T-cell (primary cell): ENCODE measurements at regions of chr10 and their contacts with region 1.

Region 1: GRCh38 chr10:68988530-68989316 is at the start of gene KIFBP:
- DNase-seq: peak; percentile 52 to 92 (median 73)
- ATAC-seq: peak; percentile 83 to 90 (median 86)
- H3K4me3 ChIP-seq: peak within 1 kb of the TSS; percentile 88 to 93
- H3K4me3 Mint-ChIP-seq: peak within 1 kb of the TSS; percentile 97 to 99 (median 99)
- H3K27ac ChIP-seq: peak within 1 kb of the TSS; percentile 62
- H3K27ac Mint-ChIP-seq: peak within 1 kb of the TSS; percentile 94 to 97
- H3K4me1 ChIP-seq: peaks cover 9 to 35% of the 10 kb centered on the region in 2 experiments
- H3K4me1 Mint-ChIP-seq: peaks cover 57 to 59% (median 58%) of the 10 kb centered on the region in 3 donors
- H3K27me3 ChIP-seq: no peaks in the 10 kb centered on the region
- H3K27me3 Mint-ChIP-seq: no peaks in the 10 kb centered on the region
- total RNA-seq, gene KIFBP: 5.9 to 15.2 (median 13.2) TPM

Region 2: GRCh38 chr10:68924593-68924992 is 64.1 kb before region 1 on chr10:
- CTCF ChIA-PET with region 1: no interaction called
- POLR2A ChIA-PET with region 1: no interaction called
- DNase-seq: no peak
- ATAC-seq: no peak
- H3K4me3 ChIP-seq: no peak overlapping the region
- H3K4me3 Mint-ChIP-seq: no peak overlapping the region
- H3K27ac ChIP-seq: no peak overlapping the region
- H3K27ac Mint-ChIP-seq: peak overlapping the region in 1 of 2 donors; percentile 61
- H3K4me1 ChIP-seq: no peaks in the 10 kb centered on the region
- H3K4me1 Mint-ChIP-seq: peaks cover 5 to 15% (median 11%) of the 10 kb centered on the region in 3 donors
- H3K27me3 ChIP-seq: no peaks in the 10 kb centered on the region
- H3K27me3 Mint-ChIP-seq: no peaks in the 10 kb centered on the region

Region 3: DNA sequence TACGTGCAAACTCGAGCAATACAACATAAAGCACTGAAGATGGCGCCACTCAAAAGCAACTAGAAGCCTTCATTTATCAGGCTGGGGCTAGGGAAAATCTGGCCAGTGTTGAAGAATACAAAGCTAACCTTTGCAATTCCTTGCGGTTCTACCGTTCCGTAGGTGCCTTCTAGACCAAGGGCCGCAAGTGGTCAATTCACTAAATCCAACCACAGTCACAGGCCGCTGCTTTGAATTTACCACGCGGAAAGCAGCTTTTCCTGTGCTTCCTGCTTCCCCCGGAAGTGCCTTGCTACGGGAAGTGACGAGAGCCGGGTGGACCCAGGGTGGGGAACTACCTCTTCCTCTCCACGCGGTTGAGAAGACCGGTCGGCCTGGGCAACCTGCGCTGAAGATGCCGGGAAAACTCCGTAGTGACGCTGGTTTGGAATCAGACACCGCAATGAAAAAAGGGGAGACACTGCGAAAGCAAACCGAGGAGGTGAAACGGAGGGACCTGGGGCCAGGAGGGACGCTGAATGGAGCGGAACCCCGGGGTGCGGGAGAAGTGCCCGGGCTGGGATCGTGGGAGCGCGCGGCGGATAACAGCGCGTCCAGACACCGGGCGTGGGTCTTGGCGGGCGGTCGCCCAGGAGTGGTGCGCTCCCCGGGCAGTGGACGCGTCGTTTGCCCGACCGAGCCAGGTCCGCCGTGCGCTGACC is 32.7 kb before region 1 on chr10 and contains the start of gene DDX21:
- CTCF ChIA-PET with region 1: interaction called, 3 to 10 read pairs
- POLR2A ChIA-PET with region 1: interaction called, 3 to 9 read pairs
- DNase-seq: peak; percentile 69 to 94 (median 88)
- ATAC-seq: peak; percentile 89 to 92 (median 91)
- H3K4me3 ChIP-seq: peak within 1 kb of the TSS; percentile 83 to 93
- H3K4me3 Mint-ChIP-seq: peak within 1 kb of the TSS; percentile 95 to 99 (median 97)
- H3K27ac ChIP-seq: peak within 1 kb of the TSS; percentile 97
- H3K27ac Mint-ChIP-seq: peak within 1 kb of the TSS; percentile 95 to 99
- H3K4me1 ChIP-seq: peaks cover 21 to 35% of the 10 kb centered on the region in 2 experiments
- H3K4me1 Mint-ChIP-seq: peaks cover 28 to 40% (median 37%) of the 10 kb centered on the region in 3 donors
- H3K27me3 ChIP-seq: no peaks in the 10 kb centered on the region
- H3K27me3 Mint-ChIP-seq: no peaks in the 10 kb centered on the region
- total RNA-seq, gene DDX21: 53.7 to 86.0 (median 60.7) TPM

Region 4: DNA sequence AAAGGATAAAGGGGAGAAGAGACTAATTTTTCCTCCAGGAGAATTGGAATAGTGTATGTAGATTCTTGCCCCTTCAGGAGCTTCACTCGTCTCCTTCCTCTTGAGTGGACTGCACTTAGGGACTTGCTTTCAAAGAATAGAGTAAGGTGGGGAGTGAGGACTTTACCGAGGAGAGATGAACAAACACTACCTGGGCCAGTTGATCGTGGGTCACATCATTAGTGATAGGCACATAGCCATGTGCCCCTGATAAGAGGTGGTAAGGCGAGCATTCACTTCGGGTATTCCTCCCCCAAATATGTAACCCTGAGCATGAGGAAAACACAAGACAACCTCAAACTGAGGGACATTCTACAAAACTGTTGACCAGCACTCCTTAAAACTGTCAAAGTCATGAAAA is 14.7 kb before region 1 on chr10:
- CTCF ChIA-PET with region 1: interaction called in 1 of 2 experiments, 3 read pairs
- POLR2A ChIA-PET with region 1: interaction called, 6 to 13 read pairs
- DNase-seq: no peak
- ATAC-seq: no peak
- H3K4me3 ChIP-seq: no peak overlapping the region
- H3K4me3 Mint-ChIP-seq: no peak overlapping the region
- H3K27ac ChIP-seq: no peak overlapping the region
- H3K27ac Mint-ChIP-seq: peak overlapping the region in 1 of 2 donors; percentile 11
- H3K4me1 ChIP-seq: peaks cover 0 to 6% of the 10 kb centered on the region in 2 experiments
- H3K4me1 Mint-ChIP-seq: peaks cover 9 to 10% (median 9%) of the 10 kb centered on the region in 3 donors
- H3K27me3 ChIP-seq: no peaks in the 10 kb centered on the region
- H3K27me3 Mint-ChIP-seq: no peaks in the 10 kb centered on the region

Region 5: DNA sequence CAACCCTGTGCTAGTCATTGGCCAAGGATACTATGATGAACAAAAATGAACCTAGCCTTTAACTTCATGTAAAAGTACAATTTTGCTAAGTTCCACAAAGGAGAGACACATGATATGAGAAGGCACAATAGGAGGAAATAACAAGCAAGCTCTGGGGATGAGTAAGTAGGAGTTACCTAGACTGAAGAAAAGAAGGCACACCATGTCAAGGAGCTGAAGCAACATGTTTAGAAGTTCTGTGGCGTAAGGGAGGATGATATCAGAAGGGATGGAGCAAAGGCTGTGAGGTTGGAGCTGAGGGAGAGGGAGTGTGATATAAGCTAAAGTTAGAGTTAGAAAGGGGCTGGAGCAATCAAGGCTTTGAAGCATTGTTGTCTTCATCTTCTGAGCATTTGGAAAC is 25.4 kb after region 1 on chr10:
- CTCF ChIA-PET with region 1: no interaction called
- POLR2A ChIA-PET with region 1: no interaction called
- DNase-seq: no peak
- ATAC-seq: no peak
- H3K4me3 ChIP-seq: no peak overlapping the region
- H3K4me3 Mint-ChIP-seq: no peak overlapping the region
- H3K27ac ChIP-seq: no peak overlapping the region
- H3K27ac Mint-ChIP-seq: no peak overlapping the region
- H3K4me1 ChIP-seq: no peaks in the 10 kb centered on the region
- H3K4me1 Mint-ChIP-seq: peaks cover 0 to 5% (median 0%) of the 10 kb centered on the region in 3 donors
- H3K27me3 ChIP-seq: no peaks in the 10 kb centered on the region
- H3K27me3 Mint-ChIP-seq: no peaks in the 10 kb centered on the region

Region 6: GRCh38 chr10:69045441-69046300 is 56.9 kb after region 1 on chr10:
- CTCF ChIA-PET with region 1: no interaction called
- POLR2A ChIA-PET with region 1: no interaction called
- DNase-seq: peak in 21 of 35 experiments; percentile 7 to 66 (median 30)
- ATAC-seq: peak; percentile 71 to 87 (median 78)
- H3K4me3 ChIP-seq: no peak overlapping the region
- H3K4me3 Mint-ChIP-seq: peak overlapping the region; percentile 42 to 63 (median 46)
- H3K27ac ChIP-seq: peak overlapping the region; percentile 93
- H3K27ac Mint-ChIP-seq: peak overlapping the region; percentile 96 to 98
- H3K4me1 ChIP-seq: peaks cover 8 to 46% of the 10 kb centered on the region in 2 experiments
- H3K4me1 Mint-ChIP-seq: peaks cover 24 to 46% (median 34%) of the 10 kb centered on the region in 3 donors
- H3K27me3 ChIP-seq: no peaks in the 10 kb centered on the region
- H3K27me3 Mint-ChIP-seq: no peaks in the 10 kb centered on the region

Region 7: DNA sequence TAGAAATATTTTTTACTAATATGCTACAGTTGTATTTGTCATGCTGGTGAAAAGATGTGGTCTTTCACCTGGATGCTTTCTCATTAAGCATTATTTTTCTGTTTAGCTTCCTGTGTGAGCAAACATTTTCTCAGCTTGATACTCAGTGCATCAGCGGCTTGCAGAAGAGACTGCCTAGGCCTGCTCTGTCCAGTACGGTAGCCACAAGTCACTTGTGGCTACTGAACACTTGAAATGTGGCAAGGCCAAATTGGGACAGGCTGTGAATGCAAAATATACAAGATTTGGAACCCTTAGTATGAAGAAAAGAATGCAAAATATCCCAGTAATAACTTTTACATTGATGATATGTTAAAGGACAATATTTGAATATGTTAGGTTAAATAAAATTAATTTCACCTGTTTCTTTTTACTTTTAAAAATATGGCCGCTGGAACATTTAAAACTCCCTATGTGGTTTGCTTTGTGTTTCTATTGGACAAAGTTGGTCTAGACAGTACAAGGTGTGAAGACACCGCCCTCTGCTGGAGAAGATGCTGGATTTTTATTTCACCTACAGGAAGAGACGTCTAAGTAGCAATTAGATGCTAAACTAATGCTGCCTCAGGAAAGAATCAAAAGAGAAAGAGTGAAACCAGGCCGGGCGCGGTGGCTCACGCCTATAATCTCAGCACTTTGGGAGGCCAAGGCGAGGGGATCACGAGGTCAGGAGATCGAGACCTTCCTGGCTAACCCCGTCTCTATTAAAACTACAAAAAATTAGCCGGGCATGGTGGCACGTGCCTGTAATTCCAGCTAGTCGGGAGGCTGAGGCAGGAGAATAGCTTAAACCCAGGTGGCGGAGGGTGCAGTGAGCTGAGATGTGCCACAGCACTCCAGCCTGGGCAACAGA is 104.5 kb after region 1 on chr10:
- CTCF ChIA-PET with region 1: interaction called, 4 to 10 read pairs
- POLR2A ChIA-PET with region 1: interaction called, 6 to 8 read pairs
- DNase-seq: peak; percentile 49 to 94 (median 79)
- ATAC-seq: peak; percentile 38 to 73 (median 64)
- H3K4me3 ChIP-seq: no peak overlapping the region
- H3K4me3 Mint-ChIP-seq: peak overlapping the region; percentile 17 to 59 (median 46)
- H3K27ac ChIP-seq: peak overlapping the region; percentile 98
- H3K27ac Mint-ChIP-seq: peak overlapping the region; percentile 88
- H3K4me1 ChIP-seq: peaks cover 31 to 57% of the 10 kb centered on the region in 2 experiments
- H3K4me1 Mint-ChIP-seq: peaks cover 47 to 69% (median 64%) of the 10 kb centered on the region in 3 donors
- H3K27me3 ChIP-seq: no peaks in the 10 kb centered on the region
- H3K27me3 Mint-ChIP-seq: no peaks in the 10 kb centered on the region

Region 8: GRCh38 chr10:69101451-69102095 is 112.8 kb after region 1 on chr10:
- CTCF ChIA-PET with region 1: interaction called, 4 to 7 read pairs
- POLR2A ChIA-PET with region 1: interaction called, 3 to 11 read pairs
- DNase-seq: peak in 6 of 35 experiments; percentile 10 to 38 (median 28)
- ATAC-seq: peak; percentile 8 to 80 (median 58)
- H3K4me3 ChIP-seq: no peak overlapping the region
- H3K4me3 Mint-ChIP-seq: peak overlapping the region in 1 of 3 donors; percentile 43
- H3K27ac ChIP-seq: peak overlapping the region; percentile 0
- H3K27ac Mint-ChIP-seq: peak overlapping the region; percentile 76 to 81
- H3K4me1 ChIP-seq: peaks cover 2 to 29% of the 10 kb centered on the region in 2 experiments
- H3K4me1 Mint-ChIP-seq: peaks cover 33 to 46% (median 33%) of the 10 kb centered on the region in 3 donors
- H3K27me3 ChIP-seq: no peaks in the 10 kb centered on the region
- H3K27me3 Mint-ChIP-seq: no peaks in the 10 kb centered on the region